Activated CD4-positive, alpha-beta T cell treated with anti-CD3 and anti-CD28 coated beads, Interleukin-2, amount 10 ng/mL, durations not matched to agents 24 days and 14 days (primary cell): ENCODE measurements at regions of chr6 and their contacts with region 1.

Region 1: GRCh38 chr6:105424175-105424783 is 21.4 kb upstream of the PREP start:
- DNase-seq: peak; percentile 88
- H3K4me3 Mint-ChIP-seq: no peak overlapping the region
- H3K27ac Mint-ChIP-seq: no peak overlapping the region
- H3K4me1 Mint-ChIP-seq: peaks cover 2% of the 10 kb centered on the region
- H3K27me3 Mint-ChIP-seq: peaks cover 19% of the 10 kb centered on the region

Region 2: DNA sequence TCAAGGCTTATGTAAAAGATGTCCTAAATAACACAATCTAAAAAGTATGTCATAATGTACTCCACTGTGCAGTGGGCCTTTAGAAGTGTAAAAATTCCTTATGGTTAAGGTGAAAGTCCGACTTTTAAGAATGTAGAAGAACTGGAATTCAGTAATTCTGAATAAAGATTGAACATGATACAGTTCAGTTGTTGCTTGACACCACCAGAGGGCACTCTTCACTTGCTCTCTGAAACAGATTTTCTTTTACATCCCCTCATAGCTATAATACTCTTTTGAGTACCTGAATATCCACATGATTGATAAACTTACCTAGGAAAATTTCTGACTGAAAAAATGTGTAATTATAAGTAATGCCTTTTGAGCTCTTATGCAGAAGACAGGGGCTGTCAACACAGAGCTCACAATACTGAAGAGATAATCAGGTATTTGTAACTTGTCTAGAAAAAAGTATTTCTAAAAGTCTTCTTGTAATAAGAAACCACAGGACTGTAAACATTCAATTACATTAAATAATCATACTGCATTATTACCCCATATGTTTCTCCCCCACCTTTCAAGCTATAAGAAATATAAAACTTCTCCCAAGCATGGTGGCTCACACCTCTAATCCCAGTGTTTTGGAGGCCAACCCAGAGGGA is 336.6 kb before region 1 on chr6:
- intact Hi-C with region 1: loop called (anchors 1 kb)
- DNase-seq: peak; percentile 77
- H3K4me3 Mint-ChIP-seq: no peak overlapping the region
- H3K27ac Mint-ChIP-seq: no peak overlapping the region
- H3K4me1 Mint-ChIP-seq: no peaks in the 10 kb centered on the region
- H3K27me3 Mint-ChIP-seq: peaks cover 4% of the 10 kb centered on the region

Region 3: DNA sequence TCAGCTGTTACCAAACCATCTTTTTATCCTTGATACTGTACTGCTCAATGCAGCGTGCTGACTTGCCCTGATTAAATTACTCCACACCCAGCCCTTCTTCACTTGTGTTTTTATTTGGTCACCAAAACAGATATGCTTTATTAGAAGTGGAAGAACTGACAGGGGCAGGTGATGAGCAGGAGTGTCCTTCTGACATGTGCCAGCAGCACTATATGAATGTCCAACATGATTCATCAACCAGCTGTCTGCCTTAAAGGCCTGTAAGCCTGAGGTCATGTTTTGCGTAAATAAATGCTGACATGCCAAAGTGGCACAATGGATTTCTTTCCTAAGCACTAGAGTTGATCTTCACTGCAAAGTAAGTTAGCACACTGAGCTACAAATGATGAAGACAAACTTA is 259.9 kb before region 1 on chr6:
- intact Hi-C with region 1: no loop called
- DNase-seq: no peak
- H3K4me3 Mint-ChIP-seq: no peak overlapping the region
- H3K27ac Mint-ChIP-seq: no peak overlapping the region
- H3K4me1 Mint-ChIP-seq: no peaks in the 10 kb centered on the region
- H3K27me3 Mint-ChIP-seq: peaks cover 39% of the 10 kb centered on the region